Heart right ventricle (tissue), 16 donors: ENCODE measurements at regions of chr3 and their contacts with region 1.

Region 1: DNA sequence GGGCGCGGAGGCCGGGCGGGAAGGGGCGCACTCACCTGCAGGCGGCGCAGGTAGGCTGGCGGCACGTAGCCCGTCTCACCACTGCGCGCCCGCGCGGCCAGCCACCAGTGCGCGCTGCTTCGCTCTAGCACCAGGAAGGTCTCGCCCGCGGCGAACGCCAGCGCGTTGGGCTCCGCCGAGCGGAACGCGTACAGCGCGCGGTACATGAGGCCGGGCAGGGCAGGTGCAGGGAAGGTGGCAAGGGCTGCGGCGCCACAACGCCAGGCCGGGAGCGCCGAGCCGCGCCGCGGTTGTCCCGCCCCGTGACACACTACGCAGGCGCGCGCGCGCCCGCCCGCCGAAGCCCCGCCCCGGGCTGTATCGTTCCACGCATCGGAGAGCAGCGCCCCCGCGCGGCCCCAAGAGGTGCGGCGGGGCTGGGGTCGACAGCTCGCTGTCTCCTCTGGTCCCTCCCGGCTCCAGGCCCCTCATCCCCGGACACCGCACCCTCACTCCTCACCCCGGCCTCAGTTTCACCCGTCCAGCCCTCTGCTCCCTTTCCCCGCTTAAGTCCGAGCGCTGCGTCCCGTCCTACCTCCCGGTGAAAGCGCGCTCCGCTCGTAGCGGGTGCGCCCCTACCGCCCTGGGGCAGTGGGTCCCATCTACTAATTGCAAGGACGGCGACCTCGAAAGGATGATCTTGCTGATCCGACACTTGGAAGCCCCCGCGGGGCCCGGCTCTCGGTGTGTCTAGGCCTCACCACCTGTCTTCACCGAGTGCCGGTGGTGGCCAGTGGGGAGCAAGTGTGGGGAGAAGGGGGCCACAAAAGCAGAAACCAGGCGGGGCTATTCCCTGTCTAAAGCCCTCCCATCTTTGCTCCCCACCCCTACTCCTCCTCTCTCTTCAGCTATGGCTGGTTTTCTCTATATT is at the start of gene NCKIPSD:
- DNase-seq: peak; percentile 87 to 94
- ATAC-seq: peak; percentile 85 to 97 (median 93)
- H3K4me3 ChIP-seq: peak within 1 kb of the TSS; percentile 63 to 99 (median 92)
- H3K27ac ChIP-seq: peak within 1 kb of the TSS; percentile 77 to 91 (median 86)
- H3K4me1 ChIP-seq: peaks cover 16 to 44% (median 34%) of the 10 kb centered on the region in 9 donors
- H3K27me3 ChIP-seq: no peaks in the 10 kb centered on the region
- CTCF ChIP-seq: peak; percentile 71 to 95 (median 84)
- total RNA-seq, gene NCKIPSD: 9.4 to 21.1 (median 15.1) TPM

Region 2: GRCh38 chr3:48581621-48582481 is 104.0 kb before region 1 on chr3:
- intact Hi-C with region 1: no loop called
- DNase-seq: no peak
- ATAC-seq: no peak
- H3K4me3 ChIP-seq: no peak overlapping the region
- H3K27ac ChIP-seq: no peak overlapping the region
- H3K4me1 ChIP-seq: no peaks in the 10 kb centered on the region
- H3K27me3 ChIP-seq: no peaks in the 10 kb centered on the region
- CTCF ChIP-seq: no peak

Region 3: DNA sequence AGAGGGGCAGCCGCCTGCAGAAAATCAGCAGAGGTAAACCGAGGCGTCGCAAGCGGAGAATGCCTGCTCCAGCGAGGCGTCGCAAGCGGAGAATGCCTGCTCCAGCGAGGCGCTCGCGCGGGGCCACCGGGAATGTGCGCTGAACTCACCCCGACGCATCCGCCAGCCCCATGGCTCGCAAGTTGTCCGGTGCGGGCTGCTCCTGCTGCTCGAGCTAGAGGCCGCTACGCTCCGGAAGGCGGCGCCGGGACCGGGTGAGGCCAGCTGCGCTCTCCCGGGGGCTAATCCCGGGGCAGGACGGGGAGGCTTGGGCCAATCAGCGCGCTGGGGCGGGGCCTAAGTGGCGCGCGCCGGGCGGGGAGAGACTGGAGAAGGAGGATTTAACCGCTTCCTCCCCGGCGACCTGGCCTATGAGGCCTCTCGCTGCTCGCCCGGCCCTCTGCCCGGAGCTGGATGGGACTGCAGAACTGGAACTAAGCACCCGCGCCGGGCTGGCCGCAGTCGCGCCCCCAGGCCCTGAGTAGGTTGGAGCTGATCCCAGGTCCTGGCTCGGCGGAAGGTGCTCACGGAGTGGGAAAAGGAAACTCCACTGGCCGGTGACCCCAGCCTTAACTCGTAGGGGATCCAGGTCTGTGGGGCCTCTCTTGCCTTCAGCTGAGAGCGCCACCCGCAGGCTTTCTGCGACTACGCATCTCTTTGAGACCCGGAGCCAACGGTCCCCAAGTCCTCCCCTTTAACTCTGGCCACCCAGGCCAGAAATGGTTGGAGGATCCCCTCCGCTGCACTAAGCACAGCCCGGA is 50.4 kb before region 1 on chr3 and contains the start of gene SLC26A6:
- intact Hi-C with region 1: loop called in 2 of 10 experiments (anchors 2 kb)
- DNase-seq: peak; percentile 97 to 98
- ATAC-seq: peak; percentile 98 to 99 (median 99)
- H3K4me3 ChIP-seq: peak within 1 kb of the TSS; percentile 73 to 99 (median 88)
- H3K27ac ChIP-seq: peak within 1 kb of the TSS; percentile 55 to 91 (median 88)
- H3K4me1 ChIP-seq: peaks cover 5 to 28% (median 21%) of the 10 kb centered on the region in 9 donors
- H3K27me3 ChIP-seq: no peaks in the 10 kb centered on the region
- CTCF ChIP-seq: peak in 8 of 9 donors; percentile 38 to 69 (median 45)
- total RNA-seq, gene SLC26A6: 5.2 to 17.7 (median 10.2) TPM